HAP-1 (cell line): ENCODE measurements at regions of chr19 and their contacts with region 1.

Region 1: GRCh38 chr19:45331423-45331822 is 8.7 kb upstream of the CKM start:
- DNase-seq: no peak
- H3K4me3 ChIP-seq: no peak overlapping the region
- H3K4me1 ChIP-seq: no peaks in the 10 kb centered on the region
- H3K27me3 ChIP-seq: no peaks in the 10 kb centered on the region

Region 2: DNA sequence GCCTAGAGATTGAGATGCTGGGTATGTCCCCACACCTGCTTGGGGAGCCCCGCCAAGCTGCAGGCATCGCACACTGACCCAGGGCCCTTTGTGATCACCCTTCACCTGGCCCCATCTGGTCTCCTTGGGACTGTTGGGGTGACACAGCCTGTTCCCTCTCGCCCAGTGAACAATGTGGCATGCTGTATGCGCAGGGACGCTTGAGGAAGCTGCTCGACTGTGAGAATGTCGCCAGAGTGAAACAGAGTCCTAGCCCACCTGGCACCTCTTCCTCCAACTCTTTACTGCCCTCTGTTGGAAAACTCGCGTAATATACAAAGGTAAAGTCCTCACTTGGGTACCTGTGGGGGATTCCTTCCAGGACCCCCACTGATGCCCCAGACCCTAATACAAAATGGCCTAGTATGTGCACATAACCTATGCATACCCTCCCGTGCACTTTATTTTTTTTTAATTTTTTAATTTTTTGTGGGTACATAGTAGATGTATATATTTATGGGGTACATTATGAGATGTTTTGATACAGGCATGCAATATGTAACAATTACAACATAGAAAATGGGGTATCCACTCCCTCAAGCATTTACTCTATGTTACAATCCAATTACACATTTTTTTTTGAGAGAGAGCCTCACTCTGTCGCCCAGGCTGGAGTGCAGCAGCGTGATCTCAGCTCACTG is 143.9 kb before region 1 on chr19:
- in situ Hi-C with region 1: loop called (anchors 10 kb)
- DNase-seq: peak; percentile 31 to 35
- H3K4me3 ChIP-seq: no peak overlapping the region
- H3K4me1 ChIP-seq: no peaks in the 10 kb centered on the region
- H3K27me3 ChIP-seq: no peaks in the 10 kb centered on the region